T-cell (primary cell): ENCODE measurements at regions of chr10 and their contacts with region 1.

Region 1: GRCh38 chr10:21495752-21496342 is 29.6 kb downstream of the SKIDA1 start:
- DNase-seq: peak; percentile 66 to 92 (median 81)
- ATAC-seq: peak; percentile 85 to 89 (median 87)
- H3K4me3 ChIP-seq: peak overlapping the region; percentile 61 to 92
- H3K4me3 Mint-ChIP-seq: peak overlapping the region; percentile 82 to 88 (median 87)
- H3K27ac ChIP-seq: no peak overlapping the region
- H3K27ac Mint-ChIP-seq: peak overlapping the region in 1 of 2 donors; percentile 55
- H3K4me1 ChIP-seq: peaks cover 12 to 47% of the 10 kb centered on the region in 2 experiments
- H3K4me1 Mint-ChIP-seq: peaks cover 22 to 26% (median 25%) of the 10 kb centered on the region in 3 donors
- H3K27me3 ChIP-seq: peaks cover 0 to 55% of the 10 kb centered on the region in 2 experiments
- H3K27me3 Mint-ChIP-seq: peaks cover 33 to 56% of the 10 kb centered on the region in 2 donors

Region 2: DNA sequence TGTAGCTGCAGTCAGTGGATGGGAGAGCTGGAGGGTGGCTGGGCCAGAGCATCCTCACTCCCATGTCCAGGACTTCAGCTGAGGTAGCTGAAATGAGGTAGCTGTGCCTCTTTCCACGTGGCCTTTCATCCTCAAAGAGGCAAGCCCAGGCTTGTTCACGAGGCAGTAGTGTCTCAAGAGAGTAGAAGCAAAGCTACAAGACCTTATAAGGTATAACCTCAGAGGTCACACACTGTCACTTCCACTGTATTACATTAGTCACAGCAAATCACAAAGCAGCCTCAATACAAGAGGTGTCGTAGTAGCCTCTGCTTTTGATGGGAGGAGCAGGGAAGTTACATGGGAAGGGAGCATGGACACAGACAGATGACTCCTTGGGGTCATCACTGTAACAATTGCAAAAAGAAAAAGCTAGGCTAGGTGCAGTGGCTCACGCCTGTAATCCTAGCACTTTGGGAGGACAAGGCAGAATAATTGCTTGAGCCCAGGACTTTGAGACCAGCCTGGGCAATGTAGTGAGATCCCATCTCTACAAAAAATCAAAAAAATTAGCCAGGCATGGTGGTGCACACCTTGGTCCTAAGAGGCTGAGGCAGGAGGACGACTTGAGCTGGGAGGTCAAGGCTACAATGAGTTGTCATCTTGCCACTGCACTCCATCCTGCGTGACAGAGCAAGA is 67.9 kb before region 1 on chr10:
- CTCF ChIA-PET with region 1: no interaction called
- POLR2A ChIA-PET with region 1: no interaction called
- DNase-seq: no peak
- ATAC-seq: no peak
- H3K4me3 ChIP-seq: no peak overlapping the region
- H3K4me3 Mint-ChIP-seq: no peak overlapping the region
- H3K27ac ChIP-seq: no peak overlapping the region
- H3K27ac Mint-ChIP-seq: no peak overlapping the region
- H3K4me1 ChIP-seq: no peaks in the 10 kb centered on the region
- H3K4me1 Mint-ChIP-seq: no peaks in the 10 kb centered on the region
- H3K27me3 ChIP-seq: no peaks in the 10 kb centered on the region
- H3K27me3 Mint-ChIP-seq: peaks cover 0 to 4% of the 10 kb centered on the region in 2 donors

Region 3: DNA sequence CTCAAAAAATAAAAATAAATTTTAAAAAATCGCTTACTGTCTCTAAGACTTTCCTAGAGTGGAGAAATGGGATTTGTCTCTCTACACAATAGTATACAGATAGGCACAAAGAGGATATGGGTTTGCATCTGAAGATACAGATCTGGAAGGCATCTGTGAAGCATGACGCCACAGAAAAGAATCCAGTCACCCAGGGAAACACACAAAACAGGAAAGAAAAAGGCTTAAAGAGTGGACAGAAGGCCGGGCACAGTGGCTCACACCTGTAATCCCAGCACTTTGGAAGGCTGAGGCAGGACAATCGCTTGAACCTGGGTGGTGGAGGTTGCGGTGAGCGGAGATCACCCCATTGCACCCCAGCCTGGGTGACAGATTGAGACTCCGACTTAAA is 31.7 kb before region 1 on chr10:
- CTCF ChIA-PET with region 1: no interaction called
- POLR2A ChIA-PET with region 1: no interaction called
- DNase-seq: no peak
- ATAC-seq: no peak
- H3K4me3 ChIP-seq: no peak overlapping the region
- H3K4me3 Mint-ChIP-seq: no peak overlapping the region
- H3K27ac ChIP-seq: no peak overlapping the region
- H3K27ac Mint-ChIP-seq: no peak overlapping the region
- H3K4me1 ChIP-seq: no peaks in the 10 kb centered on the region
- H3K4me1 Mint-ChIP-seq: no peaks in the 10 kb centered on the region
- H3K27me3 ChIP-seq: peaks cover 0 to 2% of the 10 kb centered on the region in 2 experiments
- H3K27me3 Mint-ChIP-seq: peaks cover 0 to 5% of the 10 kb centered on the region in 2 donors

Region 4: DNA sequence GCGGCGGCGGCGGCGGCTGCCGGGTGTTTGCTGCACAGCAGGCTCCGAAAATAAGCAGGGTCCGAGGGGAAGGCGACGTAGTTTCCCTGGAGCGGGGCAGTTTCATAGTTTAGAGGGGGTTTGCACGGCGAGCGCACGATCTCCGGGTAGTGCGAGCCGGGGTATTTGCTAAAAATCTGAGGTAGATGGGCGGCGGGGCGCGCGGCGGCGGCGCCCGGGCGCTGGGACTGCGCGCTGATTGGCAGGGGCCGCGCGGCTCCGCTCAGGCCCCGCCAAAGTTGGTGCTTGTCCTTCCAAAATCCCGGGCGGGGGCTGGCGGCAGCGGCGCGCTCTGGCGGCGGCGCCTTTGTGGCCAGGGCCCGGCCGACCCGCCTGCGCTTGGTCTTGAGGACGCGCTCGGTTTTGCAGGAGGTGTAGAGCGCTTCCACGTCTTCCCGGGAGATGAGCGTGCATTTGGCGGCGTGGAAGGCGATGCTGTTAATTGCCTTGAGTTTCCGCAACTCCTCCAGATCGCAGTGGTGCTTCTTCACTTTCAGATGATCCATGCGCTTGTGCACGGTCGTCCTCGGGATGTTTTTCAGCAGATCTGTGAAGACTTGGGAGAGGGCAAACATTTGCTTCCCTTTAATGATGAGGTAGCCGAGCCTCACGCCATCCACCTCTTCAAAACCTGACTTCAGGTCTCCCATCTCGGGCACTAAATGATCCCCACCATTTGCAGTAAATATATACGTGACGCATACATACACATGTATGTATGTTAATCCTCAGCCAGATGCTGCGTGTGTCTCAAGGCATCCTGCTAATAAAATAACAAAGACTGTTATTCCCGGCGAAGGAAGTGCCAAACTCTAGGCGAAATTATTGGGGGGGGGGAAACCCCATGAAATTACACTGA is 21.5 kb after region 1 on chr10:
- CTCF ChIA-PET with region 1: interaction called, 3 to 16 read pairs
- POLR2A ChIA-PET with region 1: interaction called in 1 of 2 experiments, 8 read pairs
- DNase-seq: peak in 3 of 35 experiments; percentile 27 to 50 (median 29)
- ATAC-seq: peak; percentile 42 to 53 (median 46)
- H3K4me3 ChIP-seq: peak overlapping the region; percentile 22 to 67
- H3K4me3 Mint-ChIP-seq: peak overlapping the region; percentile 75 to 80 (median 76)
- H3K27ac ChIP-seq: no peak overlapping the region
- H3K27ac Mint-ChIP-seq: peak overlapping the region in 1 of 2 donors; percentile 55
- H3K4me1 ChIP-seq: peaks cover 17 to 38% of the 10 kb centered on the region in 2 experiments
- H3K4me1 Mint-ChIP-seq: peaks cover 39 to 42% (median 39%) of the 10 kb centered on the region in 3 donors
- H3K27me3 ChIP-seq: peaks cover 8 to 46% of the 10 kb centered on the region in 2 experiments
- H3K27me3 Mint-ChIP-seq: peaks cover 70 to 87% of the 10 kb centered on the region in 2 donors

Region 5: GRCh38 chr10:21533467-21534279 is 37.8 kb after region 1 on chr10 and contains the start of gene MLLT10:
- CTCF ChIA-PET with region 1: interaction called in 1 of 2 experiments, 10 read pairs
- POLR2A ChIA-PET with region 1: interaction called in 1 of 2 experiments, 10 read pairs
- DNase-seq: peak; percentile 78 to 97 (median 94)
- ATAC-seq: peak; percentile 83 to 87 (median 85)
- H3K4me3 ChIP-seq: peak within 1 kb of the TSS; percentile 72 to 82
- H3K4me3 Mint-ChIP-seq: peak within 1 kb of the TSS; percentile 92 to 93 (median 93)
- H3K27ac ChIP-seq: peak within 1 kb of the TSS; percentile 88
- H3K27ac Mint-ChIP-seq: peak within 1 kb of the TSS; percentile 97 to 98
- H3K4me1 ChIP-seq: peaks cover 9 to 18% of the 10 kb centered on the region in 2 experiments
- H3K4me1 Mint-ChIP-seq: peaks cover 18 to 30% (median 24%) of the 10 kb centered on the region in 3 donors
- H3K27me3 ChIP-seq: no peaks in the 10 kb centered on the region
- H3K27me3 Mint-ChIP-seq: no peaks in the 10 kb centered on the region
- total RNA-seq, gene MLLT10: 57.7 to 76.5 (median 66.1) TPM

Region 6: DNA sequence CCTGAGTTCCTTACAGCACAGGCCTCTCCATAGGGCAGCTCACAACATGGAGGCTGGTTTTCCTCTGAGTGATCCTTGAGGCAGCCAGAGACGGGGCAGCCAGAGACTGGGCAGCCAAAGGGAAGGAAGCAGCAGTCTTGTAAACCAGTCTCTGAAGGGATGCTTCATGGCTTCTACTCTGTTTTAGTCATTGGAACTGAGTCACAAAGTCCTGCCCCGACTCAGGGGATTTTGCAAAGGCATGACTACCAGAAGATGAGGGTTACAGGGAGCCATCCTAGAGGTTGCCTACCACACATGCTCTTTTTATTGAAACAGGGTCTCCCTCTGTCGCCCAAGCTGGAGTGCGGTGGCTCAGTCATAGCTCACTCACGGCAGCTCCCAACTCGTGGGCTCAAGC is 775.9 kb after region 1 on chr10:
- CTCF ChIA-PET with region 1: interaction called in 1 of 2 experiments, 10 read pairs
- POLR2A ChIA-PET with region 1: no interaction called
- DNase-seq: no peak
- ATAC-seq: no peak
- H3K4me3 ChIP-seq: no peak overlapping the region
- H3K4me3 Mint-ChIP-seq: no peak overlapping the region
- H3K27ac ChIP-seq: no peak overlapping the region
- H3K27ac Mint-ChIP-seq: no peak overlapping the region
- H3K4me1 ChIP-seq: no peaks in the 10 kb centered on the region
- H3K4me1 Mint-ChIP-seq: no peaks in the 10 kb centered on the region
- H3K27me3 ChIP-seq: peaks cover 0 to 21% of the 10 kb centered on the region in 2 experiments
- H3K27me3 Mint-ChIP-seq: peaks cover 6 to 15% of the 10 kb centered on the region in 2 donors